ENCODE measurements at regions of chr3 and their contacts with region 1.

Region 1: GRCh38 chr3:40191850-40192448 is 117.6 kb upstream of the EIF1B start:
- DNase-seq: peak; percentile 92
- H3K4me3 ChIP-seq: no peak overlapping the region
- H3K27ac ChIP-seq: no peak overlapping the region
- H3K4me1 ChIP-seq: peaks cover 0 to 4% (median 0%) of the 10 kb centered on the region in 4 donors
- H3K27me3 ChIP-seq: no peaks in the 10 kb centered on the region
- CTCF ChIP-seq: peak; percentile 82 to 99 (median 86)
- EP300 ChIP-seq: no peak
- POLR2A ChIP-seq: no peak

Region 2: GRCh38 chr3:40317061-40317855 is 125.3 kb after region 1 on chr3:
- intact Hi-C with region 1: loop called (anchors 2 kb)
- DNase-seq: no peak
- H3K4me3 ChIP-seq: no peak overlapping the region
- H3K27ac ChIP-seq: no peak overlapping the region
- H3K4me1 ChIP-seq: peaks cover 22 to 28% (median 23%) of the 10 kb centered on the region in 4 donors
- H3K27me3 ChIP-seq: no peaks in the 10 kb centered on the region
- CTCF ChIP-seq: peak; percentile 72 to 89 (median 82)
- EP300 ChIP-seq: no peak
- POLR2A ChIP-seq: no peak

Region 3: GRCh38 chr3:40337136-40338108 is 145.5 kb after region 1 on chr3:
- intact Hi-C with region 1: no loop called
- DNase-seq: no peak
- H3K4me3 ChIP-seq: no peak overlapping the region
- H3K27ac ChIP-seq: no peak overlapping the region
- H3K4me1 ChIP-seq: no peaks in the 10 kb centered on the region
- H3K27me3 ChIP-seq: no peaks in the 10 kb centered on the region
- CTCF ChIP-seq: no peak
- EP300 ChIP-seq: no peak
- POLR2A ChIP-seq: no peak

Region 4: GRCh38 chr3:40899286-40899712 is 707.4 kb after region 1 on chr3:
- intact Hi-C with region 1: no loop called
- DNase-seq: no peak
- H3K4me3 ChIP-seq: no peak overlapping the region
- H3K27ac ChIP-seq: no peak overlapping the region
- H3K4me1 ChIP-seq: no peaks in the 10 kb centered on the region
- H3K27me3 ChIP-seq: no peaks in the 10 kb centered on the region
- CTCF ChIP-seq: no peak
- EP300 ChIP-seq: no peak
- POLR2A ChIP-seq: no peak

Measured in esophagus muscularis mucosa (tissue), 4 donors.